H1 (cell line): ENCODE measurements at regions of chr5 and their contacts with region 1.

Region 1: DNA sequence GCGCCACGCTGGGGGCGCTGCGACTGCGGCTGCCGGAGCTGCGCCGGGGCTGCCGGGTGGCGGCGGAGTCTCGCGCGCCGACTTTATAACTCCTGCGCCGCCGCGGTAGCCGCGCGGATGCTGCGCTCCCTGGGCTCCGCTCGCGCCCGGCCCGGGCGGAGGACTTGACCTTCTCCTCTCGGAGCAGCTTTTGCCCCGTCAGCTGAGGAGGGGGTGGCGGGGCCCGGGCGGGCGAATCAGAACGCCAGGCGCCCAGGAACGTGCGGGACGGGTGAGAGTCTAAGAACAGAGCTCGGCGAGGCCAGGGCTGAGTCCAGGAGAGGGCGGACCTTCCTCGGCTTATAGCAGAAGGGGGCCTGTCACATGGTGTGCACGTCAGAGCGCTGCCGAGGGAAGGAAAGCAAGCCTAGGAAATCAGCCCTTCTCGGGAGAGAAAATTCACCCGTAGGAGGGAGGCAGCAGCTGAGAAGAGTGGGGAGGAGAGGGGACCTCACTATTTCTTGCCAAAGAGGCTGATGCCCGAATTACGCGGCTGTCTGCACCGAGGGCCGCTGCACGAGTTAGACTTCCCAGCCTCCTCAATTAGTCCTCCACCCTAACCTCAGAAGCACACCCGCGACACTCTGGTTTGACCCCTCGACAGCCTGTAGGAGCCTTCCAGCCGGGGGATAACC is at the start of gene FOXD1:
- DNase-seq: peak in 1 of 2 experiments; percentile 88
- H3K4me3 ChIP-seq: peak within 1 kb of the TSS; percentile 22 to 62 (median 41)
- H3K27ac ChIP-seq: no peak within 1 kb of the TSS
- H3K4me1 ChIP-seq: peaks cover 6 to 19% (median 12%) of the 10 kb centered on the region in 4 experiments
- H3K27me3 ChIP-seq: peaks cover 67 to 94% (median 80%) of the 10 kb centered on the region in 4 experiments
- CTCF ChIP-seq: peak in 1 of 3 experiments; percentile 4; a peak in 1 of 4 replicates
- EP300 ChIP-seq: no peak
- POLR2A ChIP-seq: no peak
- RAD21 ChIP-seq: peak in 1 of 2 experiments; percentile 20; a peak in 1 of 4 replicates
- total RNA-seq, gene FOXD1: 0.73 and 1.1 TPM in 2 replicates

Region 2: GRCh38 chr5:73204318-73204717 is 244.3 kb before region 1 on chr5:
- CTCF ChIA-PET with region 1: no interaction called
- POLR2A ChIA-PET with region 1: no interaction called
- DNase-seq: no peak
- H3K4me3 ChIP-seq: no peak overlapping the region
- H3K27ac ChIP-seq: no peak overlapping the region
- H3K4me1 ChIP-seq: peaks cover 0 to 4% (median 2%) of the 10 kb centered on the region in 4 experiments; a peak in 3 of 7 replicates
- H3K27me3 ChIP-seq: peaks cover 0 to 8% (median 5%) of the 10 kb centered on the region in 4 experiments; a peak in 3 of 7 replicates
- CTCF ChIP-seq: no peak
- EP300 ChIP-seq: no peak
- POLR2A ChIP-seq: no peak
- RAD21 ChIP-seq: no peak

Region 3: GRCh38 chr5:73233347-73234200 is 215.0 kb before region 1 on chr5:
- CTCF ChIA-PET with region 1: interaction called, 15 read pairs
- POLR2A ChIA-PET with region 1: no interaction called
- DNase-seq: peak in 1 of 2 experiments; percentile 76
- H3K4me3 ChIP-seq: peak overlapping the region; percentile 9 to 62 (median 40)
- H3K27ac ChIP-seq: no peak overlapping the region
- H3K4me1 ChIP-seq: peaks cover 4 to 30% (median 20%) of the 10 kb centered on the region in 4 experiments
- H3K27me3 ChIP-seq: peaks cover 55 to 82% (median 74%) of the 10 kb centered on the region in 4 experiments
- CTCF ChIP-seq: peak; percentile 28 to 30 (median 29); a peak in 3 of 4 replicates
- EP300 ChIP-seq: no peak
- POLR2A ChIP-seq: no peak
- RAD21 ChIP-seq: peak in 1 of 2 experiments; percentile 16; a peak in 1 of 4 replicates

Region 4: GRCh38 chr5:73298772-73299630 is 149.6 kb before region 1 on chr5:
- CTCF ChIA-PET with region 1: interaction called, 15 read pairs
- POLR2A ChIA-PET with region 1: interaction called, 4 read pairs
- DNase-seq: peak in 1 of 2 experiments; percentile 77
- H3K4me3 ChIP-seq: peak overlapping the region; percentile 20 to 54 (median 32); a peak in 6 of 8 replicates
- H3K27ac ChIP-seq: no peak overlapping the region
- H3K4me1 ChIP-seq: peaks cover 12 to 19% (median 15%) of the 10 kb centered on the region in 4 experiments
- H3K27me3 ChIP-seq: peaks cover 77 to 95% (median 94%) of the 10 kb centered on the region in 4 experiments
- CTCF ChIP-seq: peak; percentile 42 to 52 (median 48)
- EP300 ChIP-seq: no peak
- POLR2A ChIP-seq: no peak
- RAD21 ChIP-seq: peak; percentile 3 to 41; a peak in 2 of 4 replicates

Region 5: DNA sequence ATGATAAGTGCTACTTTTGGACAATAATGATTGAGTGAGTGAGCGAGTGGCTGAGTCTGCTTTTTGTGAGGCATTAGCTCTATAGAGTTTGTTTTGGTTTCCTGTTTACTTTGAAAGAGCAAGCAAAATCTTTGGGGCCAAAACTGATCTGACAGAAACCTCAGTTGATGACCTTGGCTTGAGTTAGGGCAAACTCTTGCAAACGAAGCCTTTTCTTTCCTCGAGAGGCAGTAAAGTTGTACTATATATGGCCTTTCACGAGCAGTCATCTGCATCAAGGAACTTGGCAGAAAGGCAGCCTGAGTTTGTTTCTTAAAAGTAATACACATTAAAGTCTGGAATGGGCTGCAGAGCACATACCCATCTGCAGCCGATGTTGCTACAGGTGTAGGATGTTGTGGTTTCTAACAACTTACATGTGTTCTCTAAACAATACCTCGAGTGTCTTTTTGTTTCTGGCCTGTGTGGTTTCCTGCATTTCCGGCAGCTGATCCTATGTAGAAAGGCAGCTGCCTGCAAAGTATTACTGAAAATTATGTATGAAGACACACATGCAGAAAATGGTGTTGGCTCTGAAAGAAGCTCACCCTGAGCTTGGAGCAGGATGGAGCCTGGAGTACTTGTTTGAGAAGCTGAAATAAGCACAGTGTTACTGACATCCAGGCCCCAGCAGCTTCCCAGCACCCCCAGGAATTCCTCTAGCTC is 60.8 kb before region 1 on chr5:
- CTCF ChIA-PET with region 1: no interaction called
- POLR2A ChIA-PET with region 1: no interaction called
- DNase-seq: no peak
- H3K4me3 ChIP-seq: no peak overlapping the region
- H3K27ac ChIP-seq: no peak overlapping the region
- H3K4me1 ChIP-seq: no peaks in the 10 kb centered on the region; a peak in 1 of 7 replicates
- H3K27me3 ChIP-seq: peaks cover 6 to 11% (median 9%) of the 10 kb centered on the region in 4 experiments
- CTCF ChIP-seq: no peak
- EP300 ChIP-seq: no peak
- POLR2A ChIP-seq: no peak
- RAD21 ChIP-seq: no peak

Region 6: DNA sequence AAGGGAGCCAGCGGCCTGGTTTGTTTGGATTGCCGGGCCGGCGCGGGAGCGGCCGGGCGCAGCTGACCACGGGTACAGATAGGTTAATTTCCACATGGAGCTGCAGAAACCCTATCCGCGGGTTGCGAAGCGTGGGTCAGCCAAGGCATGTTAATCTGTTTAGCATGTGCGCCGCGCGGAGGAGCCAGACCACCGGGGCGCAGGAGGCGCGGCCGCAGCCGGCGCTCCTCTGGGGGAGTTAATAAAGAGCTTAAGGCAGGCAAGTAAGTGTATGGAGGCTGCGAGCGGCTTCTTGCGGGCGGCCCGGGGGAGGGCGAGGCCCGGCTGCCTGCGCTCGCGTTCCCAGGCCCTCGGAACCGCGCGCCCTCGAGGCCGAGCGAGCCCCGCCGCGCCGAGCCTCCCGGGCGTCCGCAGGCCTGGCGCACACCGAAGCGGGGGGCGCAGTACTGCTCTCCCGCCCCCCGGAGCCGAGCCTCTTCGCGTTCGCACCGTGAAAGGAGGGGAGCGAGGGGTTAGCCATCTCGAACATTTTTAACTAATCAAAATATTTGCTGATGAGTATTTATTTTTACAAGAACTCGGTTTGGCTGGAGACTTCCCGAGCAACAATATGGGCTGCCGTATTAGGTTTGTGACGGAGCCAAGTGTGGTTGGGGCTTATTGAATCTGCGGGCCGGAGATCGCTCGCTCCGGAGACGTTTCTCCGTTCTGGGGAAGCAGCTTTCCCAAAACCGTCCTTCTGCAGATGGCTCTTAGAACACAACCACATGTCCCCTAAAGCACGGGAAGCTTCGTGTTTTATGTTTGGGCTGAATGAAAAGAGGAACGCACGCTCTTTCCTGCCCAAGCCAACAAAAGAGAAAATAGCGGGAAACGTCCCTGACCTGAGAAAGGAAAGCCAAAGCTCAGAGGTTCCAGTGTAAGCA is 28.9 kb before region 1 on chr5:
- CTCF ChIA-PET with region 1: interaction called, 16 read pairs
- POLR2A ChIA-PET with region 1: interaction called, 9 read pairs
- DNase-seq: peak in 1 of 2 experiments; percentile 76
- H3K4me3 ChIP-seq: peak overlapping the region; percentile 49 to 64 (median 53)
- H3K27ac ChIP-seq: no peak overlapping the region
- H3K4me1 ChIP-seq: peaks cover 0 to 11% (median 0%) of the 10 kb centered on the region in 4 experiments; a peak in 4 of 7 replicates
- H3K27me3 ChIP-seq: peaks cover 46 to 69% (median 60%) of the 10 kb centered on the region in 4 experiments
- CTCF ChIP-seq: no peak; a peak in 1 of 4 replicates
- EP300 ChIP-seq: no peak
- POLR2A ChIP-seq: no peak
- RAD21 ChIP-seq: no peak; a peak in 1 of 4 replicates

Region 7: DNA sequence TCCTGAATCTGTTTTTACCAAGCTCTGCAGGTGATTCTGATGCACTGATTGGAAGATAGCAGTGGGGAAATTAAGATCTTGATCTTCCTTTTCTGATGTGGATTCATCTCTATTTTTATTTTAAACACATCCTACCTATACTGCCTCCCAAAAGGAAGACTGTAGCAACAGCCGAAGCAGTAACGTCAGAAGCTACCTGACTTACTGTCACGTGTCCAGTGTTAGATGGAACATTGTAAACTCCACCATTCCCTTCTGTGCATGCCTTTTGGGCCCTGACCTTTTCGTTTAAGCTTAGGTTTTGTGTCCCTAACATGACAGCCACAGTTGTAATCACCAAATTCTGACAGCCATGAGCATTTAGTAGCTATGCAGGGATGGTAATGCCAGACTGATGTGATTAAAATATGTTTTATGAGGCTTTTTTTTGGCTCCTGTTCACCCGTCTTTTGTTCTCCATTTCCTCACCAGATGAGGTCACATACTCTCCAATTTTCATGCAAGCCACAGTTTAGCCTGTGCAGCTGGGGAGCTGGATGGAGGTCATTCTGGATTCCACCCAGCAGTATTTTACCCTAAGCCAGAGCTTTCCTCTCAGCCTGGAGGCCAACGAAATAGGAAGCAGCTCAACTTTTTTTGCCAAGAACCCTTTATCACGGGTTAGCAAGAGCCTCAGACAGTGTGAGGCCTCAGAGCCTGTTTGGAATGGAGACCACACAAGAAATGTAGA is 15.6 kb after region 1 on chr5:
- CTCF ChIA-PET with region 1: interaction called, 13 read pairs
- POLR2A ChIA-PET with region 1: no interaction called
- DNase-seq: no peak
- H3K4me3 ChIP-seq: no peak overlapping the region
- H3K27ac ChIP-seq: no peak overlapping the region
- H3K4me1 ChIP-seq: peaks cover 2 to 23% (median 4%) of the 10 kb centered on the region in 4 experiments; a peak in 5 of 7 replicates
- H3K27me3 ChIP-seq: no peaks in the 10 kb centered on the region
- CTCF ChIP-seq: no peak
- EP300 ChIP-seq: no peak
- POLR2A ChIP-seq: no peak
- RAD21 ChIP-seq: no peak

Region 8: GRCh38 chr5:73488806-73489205 is 40.2 kb after region 1 on chr5:
- CTCF ChIA-PET with region 1: interaction called, 38 read pairs
- POLR2A ChIA-PET with region 1: interaction called, 10 read pairs
- DNase-seq: no peak
- H3K4me3 ChIP-seq: no peak overlapping the region
- H3K27ac ChIP-seq: peak overlapping the region; percentile 73
- H3K4me1 ChIP-seq: peaks cover 11 to 19% (median 15%) of the 10 kb centered on the region in 4 experiments
- H3K27me3 ChIP-seq: no peaks in the 10 kb centered on the region
- CTCF ChIP-seq: no peak
- EP300 ChIP-seq: no peak
- POLR2A ChIP-seq: no peak
- RAD21 ChIP-seq: no peak